Sciatic nerve (tissue), 2 donors: ENCODE measurements at regions of chr2 and their contacts with region 1.

Region 1: DNA sequence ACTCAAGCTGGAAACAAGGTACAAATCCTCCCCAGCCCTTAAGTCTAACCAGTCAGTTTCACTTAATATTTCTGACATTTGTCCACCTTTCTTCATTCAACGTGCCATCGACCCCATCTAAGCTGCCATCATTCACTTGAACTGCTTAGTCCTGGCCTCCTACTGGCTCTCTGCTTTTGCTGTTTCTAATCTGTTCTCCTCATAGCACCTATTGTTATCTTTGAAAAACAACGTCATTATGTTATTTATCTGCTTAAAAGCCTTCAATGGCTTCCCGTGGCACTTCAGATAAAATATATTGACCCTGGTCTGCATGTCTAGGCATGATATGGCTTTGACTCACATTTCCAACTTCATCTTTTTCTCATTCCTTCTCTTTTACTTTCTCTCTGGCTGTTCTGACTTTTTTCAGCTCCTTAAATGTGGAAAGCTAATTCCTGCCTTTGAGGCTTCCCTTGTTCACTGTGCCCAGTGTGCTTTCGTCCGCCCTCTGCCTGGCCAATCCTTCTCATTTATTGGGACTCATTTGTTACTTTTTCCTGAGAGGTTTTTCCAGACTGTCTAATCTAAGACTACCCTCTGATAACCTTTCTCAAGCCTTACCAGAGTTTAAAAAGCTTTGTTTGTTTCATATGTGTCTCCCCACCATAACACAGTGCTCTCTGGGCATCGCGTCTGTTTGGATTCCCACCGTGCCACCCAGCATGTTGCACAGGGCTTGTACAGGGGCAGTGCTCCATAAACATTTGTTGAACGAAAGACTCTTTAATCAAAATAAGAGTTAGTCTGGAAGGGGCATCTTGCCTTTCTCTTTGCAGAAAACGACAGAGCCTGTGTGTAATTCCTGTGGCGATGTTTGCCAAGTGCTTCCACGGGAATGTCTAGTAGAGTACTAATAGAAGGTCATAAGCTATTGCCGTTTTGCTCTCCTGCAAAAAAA is 183.9 kb downstream of the FMNL2 start:
- DNase-seq: no peak
- ATAC-seq: no peak

Region 2: GRCh38 chr2:150938527-150938926 is 1580.4 kb before region 1 on chr2:
- intact Hi-C with region 1: no loop called
- DNase-seq: no peak
- ATAC-seq: no peak

Region 3: GRCh38 chr2:152564754-152565551 is 46.0 kb after region 1 on chr2:
- intact Hi-C with region 1: loop called (anchors 5 kb)
- DNase-seq: no peak
- ATAC-seq: no peak

Region 4: GRCh38 chr2:152648336-152648735 is 129.4 kb after region 1 on chr2:
- intact Hi-C with region 1: no loop called
- DNase-seq: no peak
- ATAC-seq: peak; percentile 29